Ovary (tissue), 10 donors: ENCODE measurements at regions of chr16 and their contacts with region 1.

Region 1: DNA sequence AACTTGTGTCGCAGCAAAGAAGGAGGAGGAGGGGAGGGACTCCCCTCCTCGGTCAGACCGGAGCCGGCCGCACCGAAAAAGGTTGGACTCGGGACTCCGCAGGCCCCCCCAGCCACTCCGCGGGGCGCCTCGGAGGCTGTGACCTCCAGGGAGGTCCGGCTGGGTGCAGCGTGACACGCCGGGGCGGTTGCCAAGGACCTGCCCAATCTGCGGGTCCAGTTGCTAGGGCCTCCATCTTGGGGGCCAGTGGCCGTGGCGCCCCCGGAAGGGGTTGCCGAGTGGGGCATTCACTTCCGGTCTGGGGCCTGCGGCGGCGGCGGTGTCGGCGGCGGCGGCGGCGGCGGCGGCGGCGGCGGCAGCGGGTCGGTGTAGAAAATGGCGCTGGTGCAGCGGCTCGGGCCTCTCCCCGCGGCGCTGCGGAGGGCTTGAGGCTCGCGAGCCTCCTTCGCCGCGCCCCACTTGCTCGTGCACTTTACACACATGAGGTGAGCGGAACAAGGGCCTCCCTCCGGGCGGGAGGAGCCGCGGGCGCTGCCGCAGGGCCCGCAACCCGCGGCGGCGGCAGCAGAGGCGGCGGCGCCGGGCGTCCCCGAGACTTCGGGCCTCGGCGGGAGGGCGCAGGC is at the start of gene TNRC6A:
- DNase-seq: peak; percentile 91 to 94 (median 93)
- H3K4me3 ChIP-seq: peak within 1 kb of the TSS; percentile 81
- H3K27ac ChIP-seq: peak within 1 kb of the TSS; percentile 93 to 96
- H3K4me1 ChIP-seq: peaks cover 11% of the 10 kb centered on the region
- H3K27me3 ChIP-seq: no peaks in the 10 kb centered on the region
- CTCF ChIP-seq: no peak
- EP300 ChIP-seq: no peak
- POLR2A ChIP-seq: peak; percentile 88
- total RNA-seq, gene TNRC6A: 29.0 to 80.7 (median 60.4) TPM

Region 2: DNA sequence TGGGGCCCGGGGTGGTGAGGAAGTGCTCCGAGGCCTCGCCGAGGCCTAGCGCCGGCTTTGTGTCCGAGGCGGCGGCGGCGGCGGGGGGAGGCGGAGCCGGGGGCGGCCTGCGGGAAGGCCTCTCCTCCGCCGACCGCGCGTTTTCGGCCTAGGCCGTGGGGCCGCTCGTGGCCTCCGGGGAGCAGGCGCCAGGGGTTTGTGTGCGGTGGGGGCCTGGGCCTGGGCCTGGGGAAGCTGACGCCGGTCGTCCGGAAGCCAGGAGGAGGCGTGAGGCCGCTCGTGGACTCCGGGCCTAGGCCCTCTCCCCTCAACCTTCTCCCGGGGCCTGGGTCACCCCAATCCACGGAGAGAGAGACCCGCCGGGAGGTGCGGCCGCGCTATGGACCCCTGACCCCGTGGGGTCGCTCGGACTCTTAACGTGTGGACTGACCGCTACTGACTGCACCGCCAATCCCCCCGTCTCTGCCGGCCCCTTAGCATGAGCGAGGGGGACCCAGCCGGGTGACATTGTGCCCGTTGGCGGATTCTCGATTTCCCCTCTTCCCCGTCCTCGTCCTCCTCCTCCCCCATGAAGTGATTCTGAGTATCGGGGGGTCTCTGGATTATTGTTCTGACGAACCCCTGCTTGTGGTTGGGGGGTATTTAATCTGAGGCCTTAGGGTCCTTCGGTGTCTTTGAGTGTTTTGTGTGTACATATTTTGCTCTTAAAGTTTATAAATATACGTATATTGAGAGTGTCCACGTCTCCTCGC is 189.4 kb before region 1 on chr16:
- intact Hi-C with region 1: loop called in 1 of 4 experiments (anchors 10 kb)
- DNase-seq: peak; percentile 54 to 78 (median 73)
- H3K4me3 ChIP-seq: peak overlapping the region; percentile 52
- H3K27ac ChIP-seq: peak overlapping the region; percentile 91 to 99
- H3K4me1 ChIP-seq: peaks cover 3% of the 10 kb centered on the region
- H3K27me3 ChIP-seq: no peaks in the 10 kb centered on the region
- CTCF ChIP-seq: no peak
- EP300 ChIP-seq: no peak
- POLR2A ChIP-seq: no peak

Region 3: GRCh38 chr16:24789881-24790280 is 60.4 kb after region 1 on chr16:
- intact Hi-C with region 1: loop called in 1 of 4 experiments (anchors 10 kb)
- DNase-seq: no peak
- H3K4me3 ChIP-seq: no peak overlapping the region
- H3K27ac ChIP-seq: no peak overlapping the region
- H3K4me1 ChIP-seq: no peaks in the 10 kb centered on the region
- H3K27me3 ChIP-seq: no peaks in the 10 kb centered on the region
- CTCF ChIP-seq: no peak
- EP300 ChIP-seq: no peak
- POLR2A ChIP-seq: no peak

Region 4: DNA sequence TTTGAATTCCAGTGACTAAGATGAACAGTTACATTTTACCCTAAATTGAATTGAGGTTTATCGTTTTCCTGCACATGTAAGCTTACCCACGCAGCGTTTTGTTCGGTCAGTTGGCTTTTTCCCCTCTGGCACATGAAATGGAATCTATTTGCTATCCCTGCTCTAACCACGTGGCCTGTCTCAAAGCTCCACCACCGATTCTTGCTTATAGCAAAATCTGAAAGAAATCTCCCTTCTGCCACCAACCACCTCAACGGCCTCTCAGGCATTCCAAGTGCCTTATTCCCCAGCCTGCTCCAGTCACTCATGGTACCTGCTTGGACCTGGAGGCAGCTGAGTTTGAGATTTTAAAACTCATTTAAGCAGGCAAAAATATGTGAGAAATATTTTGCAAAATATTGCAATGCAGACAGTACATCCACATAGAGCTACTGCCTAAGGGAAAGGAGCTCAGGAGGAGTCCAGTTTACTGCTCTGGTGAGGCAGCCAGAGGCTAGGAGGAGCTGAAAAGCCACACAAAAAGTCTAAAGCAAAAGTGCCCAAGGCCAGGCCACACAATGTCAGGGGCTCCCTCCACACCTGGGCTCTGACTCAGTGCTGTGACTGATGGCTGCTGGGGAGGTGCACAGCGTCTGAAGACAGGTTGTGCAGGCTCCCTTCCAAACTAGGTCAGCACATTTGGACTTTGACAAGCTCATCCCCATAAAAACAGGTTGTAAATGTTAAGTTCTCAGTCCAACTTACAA is 259.3 kb after region 1 on chr16:
- intact Hi-C with region 1: no loop called
- DNase-seq: peak in 1 of 5 donors; percentile 32
- H3K4me3 ChIP-seq: no peak overlapping the region
- H3K27ac ChIP-seq: peak overlapping the region; percentile 25 to 30
- H3K4me1 ChIP-seq: peaks cover 23% of the 10 kb centered on the region
- H3K27me3 ChIP-seq: no peaks in the 10 kb centered on the region
- CTCF ChIP-seq: no peak
- EP300 ChIP-seq: no peak
- POLR2A ChIP-seq: no peak